ENCODE measurements at regions of chr11 and their contacts with region 1.

Region 1: GRCh38 chr11:120511116-120511819 is at the start of gene GRIK4:
- DNase-seq: peak; percentile 84 to 93 (median 91)
- H3K4me3 ChIP-seq: peak within 1 kb of the TSS; percentile 48
- H3K27ac ChIP-seq: peak within 1 kb of the TSS; percentile 21 to 64
- H3K4me1 ChIP-seq: peaks cover 4% of the 10 kb centered on the region
- H3K27me3 ChIP-seq: no peaks in the 10 kb centered on the region
- CTCF ChIP-seq: peak; percentile 93 to 97 (median 95)
- EP300 ChIP-seq: no peak
- POLR2A ChIP-seq: peak; percentile 19
- total RNA-seq, gene GRIK4: 1.4 to 13.4 (median 5.4) TPM

Region 2: DNA sequence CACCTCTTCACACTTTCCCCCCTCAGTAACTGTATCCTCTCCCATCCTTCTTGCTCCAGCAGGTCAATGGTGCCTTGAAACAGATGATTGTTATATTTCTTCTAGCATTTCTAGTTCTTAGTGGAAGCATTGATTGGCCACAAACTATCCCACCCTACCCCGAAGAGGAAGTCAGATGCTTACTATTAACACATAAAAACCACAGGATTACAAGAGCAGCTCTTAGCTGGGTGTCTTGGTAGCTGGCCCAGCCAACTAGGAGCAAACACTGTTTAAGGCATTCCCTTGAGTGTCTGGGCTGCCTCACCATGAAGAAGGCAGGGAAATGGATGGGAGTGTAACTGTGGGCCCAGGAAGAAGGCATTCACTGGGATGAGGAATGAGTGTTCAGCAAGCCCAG is 176.9 kb after region 1 on chr11:
- intact Hi-C with region 1: loop called (anchors 2 to 5 kb)
- DNase-seq: no peak
- H3K4me3 ChIP-seq: no peak overlapping the region
- H3K27ac ChIP-seq: no peak overlapping the region
- H3K4me1 ChIP-seq: no peaks in the 10 kb centered on the region
- H3K27me3 ChIP-seq: no peaks in the 10 kb centered on the region
- CTCF ChIP-seq: no peak
- EP300 ChIP-seq: no peak
- POLR2A ChIP-seq: no peak

Region 3: DNA sequence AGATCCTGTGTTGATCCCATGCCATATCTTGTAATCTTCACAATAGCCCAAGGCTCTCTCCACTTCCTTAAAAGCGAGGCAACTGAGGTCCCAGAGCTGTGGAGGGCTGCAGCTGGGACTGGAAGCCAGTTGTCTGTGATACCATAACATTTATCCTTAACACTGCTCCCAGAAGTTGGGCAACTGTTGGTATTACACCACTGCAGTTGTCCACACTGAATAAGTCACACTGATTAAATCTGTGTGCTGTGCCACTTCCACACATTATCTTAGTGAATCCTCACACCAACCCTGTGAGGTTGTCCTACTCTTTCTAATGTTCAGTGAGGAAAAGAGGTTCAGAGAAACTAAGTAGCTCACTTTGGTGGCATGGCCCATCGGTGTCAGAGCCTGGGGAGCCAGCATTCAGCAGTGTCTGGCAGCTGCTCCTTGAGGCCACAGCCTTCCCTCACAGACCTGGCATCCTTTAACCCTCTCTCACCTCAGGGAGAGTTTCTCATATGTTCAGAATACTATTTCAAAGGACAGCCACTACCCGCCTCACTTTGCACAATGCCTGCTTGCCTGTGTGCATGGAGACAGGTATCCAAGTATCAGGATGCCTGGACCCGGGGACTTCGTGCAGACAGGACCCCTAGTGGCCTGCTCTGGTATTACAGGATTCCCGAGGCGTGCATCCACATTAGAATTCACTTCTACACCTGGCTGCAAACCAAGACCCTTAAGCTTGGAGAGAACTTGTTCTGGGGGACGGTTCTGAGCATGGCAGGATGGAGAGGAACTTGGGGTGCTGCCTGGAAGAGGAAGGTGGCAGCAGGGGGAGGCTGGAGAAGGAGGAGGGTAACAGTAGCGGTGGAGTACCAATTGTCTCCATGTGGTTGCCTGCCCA is 290.8 kb after region 1 on chr11:
- intact Hi-C with region 1: loop called in 2 of 4 experiments (anchors 2 to 10 kb)
- DNase-seq: peak; percentile 60 to 80 (median 76)
- H3K4me3 ChIP-seq: no peak overlapping the region
- H3K27ac ChIP-seq: no peak overlapping the region
- H3K4me1 ChIP-seq: no peaks in the 10 kb centered on the region
- H3K27me3 ChIP-seq: no peaks in the 10 kb centered on the region
- CTCF ChIP-seq: peak; percentile 68 to 80 (median 74)
- EP300 ChIP-seq: no peak
- POLR2A ChIP-seq: no peak

Region 4: DNA sequence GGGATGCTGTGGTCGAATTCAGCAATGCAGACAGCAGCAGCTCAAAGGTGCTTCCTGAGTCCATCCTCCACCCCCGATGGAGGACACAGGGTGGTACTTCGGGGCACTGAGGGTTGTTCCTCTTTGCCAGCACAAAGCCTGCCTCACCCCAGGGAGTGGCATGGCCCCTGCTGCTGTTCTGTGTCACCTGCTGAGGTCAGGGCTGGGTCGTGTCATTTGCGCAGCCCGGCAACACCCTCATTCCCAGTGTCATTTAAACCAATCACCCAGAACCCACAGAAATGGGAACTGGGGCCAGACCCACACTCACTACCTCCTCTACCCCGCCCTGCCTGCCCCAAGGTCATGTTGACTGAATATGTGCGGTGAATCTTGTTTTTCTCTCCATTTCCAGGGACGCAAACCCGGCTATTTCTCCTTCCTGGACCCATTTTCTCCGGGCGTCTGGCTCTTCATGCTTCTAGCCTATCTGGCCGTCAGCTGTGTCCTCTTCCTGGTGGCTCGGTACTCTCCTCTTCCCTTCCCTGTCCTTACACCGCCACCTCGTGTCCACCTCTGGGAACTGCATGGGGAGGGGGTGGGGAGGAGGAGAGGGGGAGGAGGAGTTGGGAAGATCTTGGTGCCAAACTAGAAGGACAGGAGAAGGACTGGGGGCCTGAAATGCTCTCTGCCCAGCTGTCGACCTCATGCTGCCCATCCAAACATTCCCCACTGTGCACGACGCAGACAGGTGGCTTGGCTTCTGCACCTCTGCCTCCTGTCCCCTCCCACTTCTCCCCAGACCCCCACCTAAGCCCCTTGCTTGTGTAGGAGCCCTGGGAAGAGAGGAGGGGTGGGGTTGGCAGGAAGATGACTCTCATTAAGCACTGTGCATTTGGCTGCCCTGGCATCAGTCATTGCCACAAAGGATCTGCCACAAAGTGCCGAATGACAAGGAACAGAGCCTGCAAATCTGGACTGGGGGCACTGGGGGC is 441.5 kb after region 1 on chr11:
- intact Hi-C with region 1: loop called in 3 of 4 experiments (anchors 2 to 10 kb)
- DNase-seq: peak; percentile 74 to 85 (median 80)
- H3K4me3 ChIP-seq: no peak overlapping the region
- H3K27ac ChIP-seq: no peak overlapping the region
- H3K4me1 ChIP-seq: peaks cover 4% of the 10 kb centered on the region
- H3K27me3 ChIP-seq: no peaks in the 10 kb centered on the region
- CTCF ChIP-seq: peak in 2 of 3 donors; percentile 30 to 51
- EP300 ChIP-seq: no peak
- POLR2A ChIP-seq: no peak

Region 5: DNA sequence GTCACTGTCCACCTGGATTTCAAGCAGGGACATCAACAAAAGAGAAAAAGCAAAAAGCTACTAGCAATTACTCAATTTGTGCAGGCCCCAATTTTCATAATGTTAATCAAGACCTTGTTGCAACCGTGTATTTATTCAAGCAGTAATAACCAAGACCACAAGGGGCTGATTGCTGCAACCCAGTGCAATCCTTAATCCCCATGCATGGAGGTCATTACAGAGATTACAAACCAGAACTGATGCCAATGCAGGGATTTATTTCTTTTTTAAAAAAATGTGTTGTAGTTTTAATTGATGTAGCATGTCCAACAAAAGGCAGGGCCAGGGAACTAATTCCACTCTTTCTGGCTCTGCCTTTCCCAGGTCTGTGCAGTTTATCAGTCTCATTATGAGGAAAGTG is 608.2 kb after region 1 on chr11:
- intact Hi-C with region 1: loop called in 2 of 4 experiments (anchors 5 to 10 kb)
- DNase-seq: no peak
- H3K4me3 ChIP-seq: no peak overlapping the region
- H3K27ac ChIP-seq: no peak overlapping the region
- H3K4me1 ChIP-seq: no peaks in the 10 kb centered on the region
- H3K27me3 ChIP-seq: no peaks in the 10 kb centered on the region
- CTCF ChIP-seq: no peak
- EP300 ChIP-seq: no peak
- POLR2A ChIP-seq: no peak

Measured in ovary (tissue), 10 donors.